Dorsolateral prefrontal cortex (tissue), 120 donors: ENCODE measurements at regions of chr7 and their contacts with region 1.

Region 1: DNA sequence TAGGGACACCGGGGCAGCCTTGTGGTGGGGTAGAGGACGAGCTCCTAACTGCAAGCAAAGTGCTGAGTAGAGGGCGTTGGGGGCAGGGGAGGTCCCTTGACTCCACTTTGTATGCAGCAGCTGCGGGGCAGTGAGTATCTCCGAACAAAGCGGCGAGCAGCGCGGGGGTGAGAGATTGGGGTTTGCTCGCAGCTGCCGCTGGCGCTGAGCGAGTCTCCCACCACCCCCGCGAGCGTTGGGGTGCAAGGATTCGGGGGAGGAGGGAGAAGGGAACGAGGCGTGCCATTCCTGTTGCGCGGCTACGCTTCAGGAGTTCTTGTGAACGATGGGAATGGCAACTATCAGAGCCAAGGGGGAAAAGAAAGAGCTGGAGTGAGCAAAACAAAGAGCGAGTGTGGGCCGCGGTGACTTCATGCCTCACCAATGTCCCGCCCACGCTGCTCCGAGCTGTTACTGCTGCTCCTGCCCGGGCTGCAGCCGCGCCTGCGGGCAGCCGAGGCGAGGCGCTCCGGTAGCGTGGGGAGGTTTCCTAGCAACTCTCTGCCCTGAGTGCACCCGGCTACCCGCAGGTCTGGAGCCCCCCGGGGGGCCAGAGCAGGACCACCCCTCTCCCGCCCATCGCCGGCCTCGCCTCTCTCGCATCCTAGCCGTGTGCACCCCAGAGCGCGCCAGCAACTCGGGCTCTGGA is at the start of gene ITGB8:
- DNase-seq: peak; percentile 39 to 95 (median 92)
- H3K4me3 ChIP-seq: peak within 1 kb of the TSS; percentile 53 to 90 (median 75)
- H3K27ac ChIP-seq: peak within 1 kb of the TSS; percentile 43 to 99 (median 96)
- H3K27me3 ChIP-seq: no peaks in the 10 kb centered on the region
- CTCF ChIP-seq: peak in 8 of 56 donors; percentile 1 to 18 (median 4)
- total RNA-seq, gene ITGB8: 39.2 to 161 (median 86.9) TPM

Region 2: GRCh38 chr7:19713676-19714075 is 616.7 kb before region 1 on chr7:
- intact Hi-C with region 1: loop called (anchors 10 kb)
- DNase-seq: peak in 3 of 10 donors; percentile 6 to 41 (median 34)
- H3K4me3 ChIP-seq: no peak overlapping the region
- H3K27ac ChIP-seq: no peak overlapping the region
- H3K27me3 ChIP-seq: no peaks in the 10 kb centered on the region
- CTCF ChIP-seq: peak; percentile 48 to 83 (median 71)

Region 3: DNA sequence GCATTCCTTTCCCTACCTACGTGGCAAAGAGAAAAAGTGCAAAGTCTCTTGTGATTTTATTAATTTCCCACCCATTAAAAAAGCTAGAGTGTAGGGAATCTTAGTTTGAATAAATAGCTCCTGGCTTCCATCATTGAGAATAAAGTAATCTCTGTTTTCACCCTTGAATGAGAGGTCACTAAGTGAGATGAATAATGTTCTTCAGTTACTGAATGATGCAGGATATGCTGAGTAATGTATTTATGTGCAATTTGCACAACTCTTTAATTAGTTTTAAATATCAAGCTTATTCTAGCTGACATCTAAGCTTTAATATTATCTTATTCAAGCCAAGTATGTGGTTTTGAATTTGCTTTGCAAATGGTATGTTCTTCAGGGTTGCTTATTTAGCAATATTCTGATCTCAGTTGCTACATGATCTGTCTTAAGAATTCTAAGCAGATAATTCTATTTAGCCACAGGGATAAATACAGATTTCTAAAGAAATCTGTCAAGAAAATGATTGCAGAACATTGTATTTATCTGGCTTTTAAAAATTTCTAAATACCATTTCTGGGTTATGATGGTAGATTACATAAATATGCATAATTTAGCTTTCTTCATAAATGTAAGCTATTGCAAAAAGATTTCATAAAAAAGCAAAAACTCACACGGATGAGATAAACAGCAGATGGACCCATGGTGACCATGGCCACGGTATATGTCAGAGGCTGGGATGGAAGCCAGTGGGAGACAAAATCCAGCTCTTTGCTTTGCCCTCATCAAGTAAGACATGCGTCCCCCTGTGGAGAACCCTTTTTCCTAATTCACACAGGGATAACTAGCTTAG is 254.2 kb before region 1 on chr7:
- intact Hi-C with region 1: no loop called
- DNase-seq: no peak
- H3K4me3 ChIP-seq: no peak overlapping the region
- H3K27ac ChIP-seq: no peak overlapping the region
- H3K27me3 ChIP-seq: no peaks in the 10 kb centered on the region
- CTCF ChIP-seq: no peak

Region 4: DNA sequence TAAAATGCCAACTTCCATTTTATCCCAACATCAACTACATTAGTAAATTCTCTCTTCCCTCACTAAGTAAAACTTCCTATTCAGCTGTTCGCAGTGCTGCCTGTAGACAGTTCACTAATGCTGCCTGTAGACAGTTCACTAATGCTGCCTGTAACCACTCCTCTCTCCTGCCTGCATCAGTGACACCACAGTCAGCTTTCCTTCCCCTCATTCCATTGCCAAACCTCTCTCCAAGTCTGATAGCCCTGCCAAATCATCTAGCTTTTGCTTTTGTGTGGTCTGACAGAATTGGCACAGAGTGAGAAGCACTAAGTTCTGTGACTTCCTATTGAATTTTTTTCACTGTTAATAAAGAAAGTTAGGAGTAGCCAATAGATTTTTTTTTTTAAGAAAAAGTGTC is 70.2 kb before region 1 on chr7:
- intact Hi-C with region 1: no loop called
- DNase-seq: no peak
- H3K4me3 ChIP-seq: no peak overlapping the region
- H3K27ac ChIP-seq: no peak overlapping the region
- H3K27me3 ChIP-seq: no peaks in the 10 kb centered on the region
- CTCF ChIP-seq: no peak

Region 5: GRCh38 chr7:20395511-20395910 is 65.1 kb after region 1 on chr7:
- intact Hi-C with region 1: loop called in 1 of 2 experiments (anchors 5 kb)
- DNase-seq: no peak
- H3K4me3 ChIP-seq: no peak overlapping the region
- H3K27ac ChIP-seq: no peak overlapping the region
- H3K27me3 ChIP-seq: no peaks in the 10 kb centered on the region
- CTCF ChIP-seq: no peak

Region 6: DNA sequence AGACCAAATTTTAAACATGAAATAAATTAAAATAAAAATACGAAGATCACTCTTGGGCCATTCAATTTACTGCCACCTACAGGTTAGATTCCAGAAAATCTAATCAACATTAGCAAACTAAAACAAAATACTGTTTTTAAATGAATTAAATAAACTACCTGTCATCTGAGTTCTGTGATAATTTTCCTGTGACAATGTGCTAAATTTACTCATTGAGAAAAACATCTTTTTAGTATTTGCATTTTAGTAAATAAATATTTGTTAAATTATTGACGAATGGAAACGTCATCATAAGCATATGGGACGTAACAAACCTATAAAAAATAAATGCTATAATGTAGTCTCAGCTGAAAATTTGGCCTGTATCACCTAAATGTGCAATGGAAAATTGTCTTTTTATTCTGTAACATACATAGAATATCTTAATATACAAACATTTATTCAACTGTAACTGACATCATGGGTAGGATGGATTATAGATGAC is 72.4 kb after region 1 on chr7:
- intact Hi-C with region 1: loop called (anchors 2 to 5 kb)
- DNase-seq: no peak
- H3K4me3 ChIP-seq: no peak overlapping the region
- H3K27ac ChIP-seq: no peak overlapping the region
- H3K27me3 ChIP-seq: no peaks in the 10 kb centered on the region
- CTCF ChIP-seq: peak; percentile 15 to 73 (median 54)

Region 7: GRCh38 chr7:20519645-20520044 is 189.3 kb after region 1 on chr7:
- intact Hi-C with region 1: loop called in 1 of 2 experiments (anchors 5 kb)
- DNase-seq: no peak
- H3K4me3 ChIP-seq: peak overlapping the region in 1 of 59 donors; percentile 29
- H3K27ac ChIP-seq: peak overlapping the region in 18 of 59 donors; percentile 1 to 77 (median 34)
- H3K27me3 ChIP-seq: no peaks in the 10 kb centered on the region
- CTCF ChIP-seq: no peak